MCF 10A (cell line): ENCODE measurements at regions of chr1 and their contacts with region 1.

Region 1: GRCh38 chr1:206912445-206913095 is 9.2 kb downstream of the FCMR start:
- DNase-seq: peak; percentile 96
- H3K4me3 Mint-ChIP-seq: no peak overlapping the region
- H3K27ac Mint-ChIP-seq: no peak overlapping the region
- H3K4me1 Mint-ChIP-seq: peaks cover 28% of the 10 kb centered on the region
- H3K27me3 Mint-ChIP-seq: peaks cover 43% of the 10 kb centered on the region
- CTCF ChIP-seq: peak; percentile 94

Region 2: DNA sequence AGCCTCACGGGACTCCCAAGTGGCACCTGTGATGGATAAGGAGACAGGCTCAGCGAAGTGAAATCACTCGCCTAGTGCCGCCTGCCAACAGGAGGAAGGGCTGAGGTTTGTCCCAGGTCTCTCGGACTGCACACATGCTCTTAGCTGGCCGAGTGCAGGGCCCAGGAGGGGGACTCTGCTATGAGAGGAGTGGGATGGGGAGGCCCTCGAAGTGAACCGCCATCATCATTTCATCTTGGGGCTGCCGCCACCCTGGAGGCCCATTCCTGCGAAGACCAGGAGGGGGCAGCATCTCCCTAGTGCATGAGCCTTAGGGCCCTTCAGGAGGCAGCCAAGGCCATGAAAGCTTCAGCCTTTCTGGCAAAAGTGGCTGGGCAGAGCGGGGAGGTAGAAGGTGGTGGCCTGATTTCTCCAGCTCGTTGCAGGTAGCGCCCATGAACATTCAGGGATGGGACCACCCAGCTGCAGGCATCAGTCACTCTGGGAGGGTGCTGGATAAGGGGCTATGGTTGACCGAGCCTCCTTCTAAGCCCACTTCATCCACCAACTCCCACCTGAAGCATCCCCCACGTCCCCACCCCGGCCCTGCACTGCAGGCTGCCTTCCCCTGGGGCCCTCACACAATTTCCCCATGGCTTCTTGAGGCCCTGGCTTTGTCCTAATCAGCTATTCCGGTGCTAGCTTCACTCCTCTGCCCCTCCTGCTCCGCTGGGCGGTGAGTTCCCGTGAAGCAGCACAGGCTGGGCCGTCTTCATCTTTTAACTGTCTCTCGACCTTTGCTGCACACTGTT is 422.4 kb before region 1 on chr1:
- CTCF ChIA-PET with region 1: interaction called, 10 read pairs
- POLR2A ChIA-PET with region 1: no interaction called
- intact Hi-C with region 1: loop called (anchors 5 kb)
- DNase-seq: peak; percentile 89
- H3K4me3 Mint-ChIP-seq: no peak overlapping the region
- H3K27ac Mint-ChIP-seq: no peak overlapping the region
- H3K4me1 Mint-ChIP-seq: no peaks in the 10 kb centered on the region
- H3K27me3 Mint-ChIP-seq: no peaks in the 10 kb centered on the region
- CTCF ChIP-seq: peak; percentile 100

Region 3: DNA sequence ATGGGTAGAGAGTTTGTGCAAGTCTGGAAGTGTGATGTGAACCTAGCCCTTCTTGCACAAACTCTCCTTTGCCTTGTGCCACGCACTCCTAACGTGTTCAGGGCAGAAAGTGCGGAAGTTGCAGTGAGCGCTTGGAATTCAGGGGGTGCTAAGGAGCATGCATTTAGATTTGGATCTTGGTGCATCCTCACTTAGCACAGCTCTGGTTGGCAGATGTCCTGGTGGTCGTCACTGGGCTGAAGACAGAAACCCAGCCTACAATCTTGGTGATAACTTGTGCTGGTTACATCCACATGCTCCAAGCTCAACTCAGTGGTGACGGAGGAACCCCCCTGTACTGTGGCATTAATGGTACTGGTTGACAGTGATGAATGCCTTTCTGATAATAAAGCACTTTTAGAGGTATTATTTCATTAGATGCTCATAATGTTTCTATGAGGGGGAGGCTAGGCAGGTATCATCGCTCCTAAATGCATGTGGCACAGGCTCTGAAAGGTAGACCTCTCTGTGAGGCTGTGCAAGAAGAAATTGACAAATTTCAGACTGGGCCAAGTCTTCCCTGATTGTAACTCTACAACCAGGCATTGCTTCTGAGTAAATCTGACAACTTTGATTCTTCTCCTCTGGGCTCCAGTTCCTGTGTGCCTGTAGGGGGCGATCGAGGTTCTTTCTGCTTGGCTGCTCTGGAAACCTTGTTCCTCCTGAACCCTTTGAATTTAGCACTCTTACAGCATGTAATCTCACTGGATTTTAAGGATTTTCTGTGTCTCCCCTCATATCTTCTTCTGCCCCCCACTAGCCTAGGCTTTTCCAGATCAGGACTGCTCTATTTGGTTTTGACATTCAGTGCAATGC is 187.2 kb before region 1 on chr1:
- CTCF ChIA-PET with region 1: interaction called, 297 read pairs
- POLR2A ChIA-PET with region 1: interaction called, 10 read pairs
- intact Hi-C with region 1: loop called (anchors 1 kb)
- DNase-seq: peak; percentile 78
- H3K4me3 Mint-ChIP-seq: no peak overlapping the region
- H3K27ac Mint-ChIP-seq: no peak overlapping the region
- H3K4me1 Mint-ChIP-seq: peaks cover 57% of the 10 kb centered on the region
- H3K27me3 Mint-ChIP-seq: no peaks in the 10 kb centered on the region
- CTCF ChIP-seq: peak; percentile 54

Region 4: GRCh38 chr1:206808615-206809014 is 104.0 kb before region 1 on chr1:
- CTCF ChIA-PET with region 1: interaction called, 243 read pairs
- POLR2A ChIA-PET with region 1: interaction called, 25 read pairs
- intact Hi-C with region 1: loop called (anchors 1 kb)
- DNase-seq: peak; percentile 67
- H3K4me3 Mint-ChIP-seq: no peak overlapping the region
- H3K27ac Mint-ChIP-seq: no peak overlapping the region
- H3K4me1 Mint-ChIP-seq: peaks cover 5% of the 10 kb centered on the region
- H3K27me3 Mint-ChIP-seq: peaks cover 41% of the 10 kb centered on the region
- CTCF ChIP-seq: peak; percentile 30

Region 5: GRCh38 chr1:206885341-206886060 is 27.1 kb before region 1 on chr1:
- CTCF ChIA-PET with region 1: interaction called, 53 read pairs
- POLR2A ChIA-PET with region 1: interaction called, 271 read pairs
- intact Hi-C with region 1: loop called (anchors 1 kb)
- DNase-seq: peak; percentile 90
- H3K4me3 Mint-ChIP-seq: peak overlapping the region; percentile 5
- H3K27ac Mint-ChIP-seq: peak overlapping the region; percentile 58
- H3K4me1 Mint-ChIP-seq: peaks cover 66% of the 10 kb centered on the region
- H3K27me3 Mint-ChIP-seq: no peaks in the 10 kb centered on the region
- CTCF ChIP-seq: no peak

Region 6: DNA sequence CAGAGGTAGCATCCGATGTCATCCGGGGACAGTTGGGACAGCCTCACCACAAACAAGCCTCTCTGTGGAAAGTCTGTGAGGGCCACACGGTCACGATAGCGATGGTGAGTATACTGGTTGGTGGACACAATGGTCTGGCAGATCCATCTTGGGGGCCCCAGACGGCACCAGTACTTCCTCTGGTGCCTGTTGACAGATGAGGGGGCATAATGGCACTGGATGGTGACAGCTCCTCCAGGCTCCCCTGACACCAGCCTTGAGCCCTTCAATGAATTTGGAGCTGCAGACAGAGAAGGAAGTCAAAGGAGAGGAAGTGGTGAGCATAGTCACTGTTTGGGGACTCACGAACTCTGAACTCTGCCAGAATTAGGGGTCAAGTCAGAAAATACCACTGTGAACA is 49.7 kb after region 1 on chr1:
- CTCF ChIA-PET with region 1: interaction called, 26 read pairs
- POLR2A ChIA-PET with region 1: no interaction called
- intact Hi-C with region 1: no loop called
- DNase-seq: no peak
- H3K4me3 Mint-ChIP-seq: no peak overlapping the region
- H3K27ac Mint-ChIP-seq: peak overlapping the region; percentile 1
- H3K4me1 Mint-ChIP-seq: peaks cover 27% of the 10 kb centered on the region
- H3K27me3 Mint-ChIP-seq: no peaks in the 10 kb centered on the region
- CTCF ChIP-seq: no peak

Region 7: GRCh38 chr1:207077470-207078377 is 165.2 kb after region 1 on chr1:
- CTCF ChIA-PET with region 1: interaction called, 8 read pairs
- POLR2A ChIA-PET with region 1: no interaction called
- intact Hi-C with region 1: loop called (anchors 1 kb)
- DNase-seq: peak; percentile 96
- H3K4me3 Mint-ChIP-seq: no peak overlapping the region
- H3K27ac Mint-ChIP-seq: no peak overlapping the region
- H3K4me1 Mint-ChIP-seq: peaks cover 23% of the 10 kb centered on the region
- H3K27me3 Mint-ChIP-seq: peaks cover 7% of the 10 kb centered on the region
- CTCF ChIP-seq: peak; percentile 99